Endothelial cell of umbilical vein (primary cell): ENCODE measurements at regions of chr9 and their contacts with region 1.

Region 1: DNA sequence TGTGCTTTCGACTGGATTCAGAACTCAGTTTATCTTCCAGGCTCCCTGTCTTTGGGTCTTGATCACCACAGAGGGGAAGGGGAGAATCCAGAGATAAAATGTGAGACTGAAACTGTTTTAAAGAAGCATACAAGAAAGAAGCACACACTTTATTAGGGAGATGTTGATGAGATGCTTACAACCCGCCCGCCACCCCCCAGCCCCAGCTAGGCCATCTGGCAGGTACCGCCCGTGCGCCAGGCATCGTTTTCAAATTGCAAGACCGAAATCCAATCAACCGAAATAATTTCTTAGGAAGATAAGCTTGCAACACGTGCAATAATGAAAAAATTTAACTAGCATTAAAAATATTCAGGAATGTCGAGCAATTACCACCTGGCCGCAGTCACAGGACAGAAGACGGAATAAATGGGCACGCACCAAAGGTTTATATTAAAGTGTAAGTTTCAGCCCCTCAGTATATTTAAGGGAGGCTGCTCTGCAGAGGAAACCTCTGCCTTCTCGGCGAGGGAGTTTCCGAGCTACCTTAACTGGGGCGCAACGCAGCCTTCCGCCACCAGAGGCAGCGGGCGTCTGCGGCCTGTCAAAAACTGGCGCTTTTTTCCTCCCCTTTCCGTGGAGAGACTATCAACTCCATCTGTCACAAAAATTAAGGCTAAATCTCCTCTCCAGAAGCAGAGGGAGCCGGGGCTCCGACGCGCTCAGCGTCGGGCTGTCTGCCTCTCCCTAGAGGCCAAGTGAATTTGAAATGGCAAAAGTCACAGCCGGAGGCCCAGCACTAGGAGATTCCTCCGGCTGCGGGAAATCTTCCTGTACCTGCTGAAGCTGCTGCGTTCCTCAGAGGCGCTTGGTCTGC is 996 bp upstream of the GAS1 start:
- DNase-seq: peak; percentile 61
- H3K4me3 ChIP-seq: peak overlapping the region in 2 of 3 experiments; percentile 30 to 69
- H3K27ac ChIP-seq: no peak overlapping the region
- H3K4me1 ChIP-seq: peaks cover 3% of the 10 kb centered on the region
- H3K27me3 ChIP-seq: peaks cover 12 to 20% of the 10 kb centered on the region in 2 experiments
- CTCF ChIP-seq: peak; percentile 58 to 84
- POLR2A ChIP-seq: no peak

Region 2: DNA sequence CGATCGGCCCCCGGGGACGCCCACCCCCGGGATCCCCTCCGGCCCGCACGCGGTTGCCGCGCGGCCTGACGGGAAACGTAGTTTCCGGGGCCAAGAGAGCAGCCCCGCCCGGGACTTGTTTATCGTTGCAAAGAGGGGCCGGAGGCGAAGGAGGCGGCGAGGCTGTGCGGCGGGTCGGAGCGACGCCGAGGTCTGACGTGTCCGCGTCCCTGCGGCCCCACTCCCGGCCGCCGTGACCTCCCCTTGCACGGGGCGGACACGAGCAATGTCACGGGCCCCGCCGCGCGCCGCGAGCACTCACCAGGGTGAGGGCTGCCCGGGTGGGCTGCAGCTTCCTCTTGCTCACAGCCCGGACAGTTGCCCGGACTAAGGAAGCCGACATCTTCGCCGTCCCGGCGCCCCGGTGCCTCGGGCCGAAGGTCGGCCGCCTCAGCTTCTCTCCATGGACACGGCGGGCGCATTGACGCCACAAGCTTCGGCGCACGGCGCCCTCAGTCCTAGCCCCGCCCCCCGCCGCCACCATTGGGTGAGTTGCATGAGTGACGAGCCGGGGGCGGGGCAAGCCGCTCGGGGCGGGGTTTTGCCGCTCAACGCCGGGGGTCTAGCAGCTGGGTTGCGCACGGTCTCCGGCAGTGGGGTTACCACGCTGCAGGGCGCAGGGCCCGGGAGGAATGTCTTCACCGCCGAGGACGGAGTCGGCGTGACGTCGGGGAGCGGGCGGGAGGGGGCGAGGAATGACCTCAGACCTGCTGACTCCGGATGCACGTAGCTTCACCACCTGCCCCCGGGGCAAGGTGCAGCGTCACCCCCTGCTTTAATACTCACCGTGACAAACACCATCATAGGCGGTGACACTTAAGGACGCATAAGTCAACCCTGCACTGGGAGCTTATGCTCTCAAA is 666.0 kb before region 1 on chr9 and contains the start of gene ISCA1:
- CTCF ChIA-PET with region 1: no interaction called
- POLR2A ChIA-PET with region 1: no interaction called
- dilution Hi-C with region 1: no loop called
- intact Hi-C with region 1: loop called (anchors 1 kb)
- DNase-seq: peak; percentile 90
- H3K4me3 ChIP-seq: peak within 1 kb of the TSS; percentile 47 to 84 (median 76)
- H3K27ac ChIP-seq: peak within 1 kb of the TSS; percentile 88
- H3K4me1 ChIP-seq: peaks cover 11% of the 10 kb centered on the region
- H3K27me3 ChIP-seq: no peaks in the 10 kb centered on the region
- CTCF ChIP-seq: no peak
- POLR2A ChIP-seq: peak; percentile 83
- total RNA-seq, gene ISCA1: 20.6 and 22.2 TPM in 2 replicates

Region 3: DNA sequence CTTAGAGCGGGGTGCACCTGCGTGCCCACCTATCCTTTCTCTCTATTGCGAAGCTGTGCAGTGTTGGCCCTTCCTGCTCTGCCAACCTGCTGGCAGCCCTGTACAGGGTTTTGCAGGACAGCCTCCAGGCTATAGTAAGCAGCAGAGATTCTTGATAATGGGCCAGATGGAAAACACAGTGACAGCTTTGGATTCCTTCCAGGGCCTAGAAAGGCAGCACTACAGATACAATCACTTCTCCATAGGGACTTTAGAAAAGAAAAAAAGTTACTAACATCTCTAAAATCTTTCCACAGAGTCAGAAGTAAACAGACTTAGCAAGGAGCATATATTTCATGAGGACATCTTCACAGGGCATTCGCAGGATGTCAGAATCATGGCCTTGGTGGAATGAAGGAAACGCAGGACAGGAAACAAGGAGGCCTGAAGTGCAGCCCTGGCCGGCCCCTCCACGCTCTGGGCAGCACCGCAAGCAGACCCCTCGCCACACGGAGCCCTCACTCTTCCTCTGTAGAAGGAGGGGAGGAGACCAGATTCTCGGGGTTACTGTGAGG is 171.1 kb after region 1 on chr9:
- CTCF ChIA-PET with region 1: no interaction called
- POLR2A ChIA-PET with region 1: interaction called, 10 read pairs
- dilution Hi-C with region 1: no loop called
- intact Hi-C with region 1: no loop called
- DNase-seq: peak; percentile 41
- H3K4me3 ChIP-seq: no peak overlapping the region
- H3K27ac ChIP-seq: no peak overlapping the region
- H3K4me1 ChIP-seq: no peaks in the 10 kb centered on the region
- H3K27me3 ChIP-seq: no peaks in the 10 kb centered on the region
- CTCF ChIP-seq: no peak
- POLR2A ChIP-seq: no peak

Region 4: DNA sequence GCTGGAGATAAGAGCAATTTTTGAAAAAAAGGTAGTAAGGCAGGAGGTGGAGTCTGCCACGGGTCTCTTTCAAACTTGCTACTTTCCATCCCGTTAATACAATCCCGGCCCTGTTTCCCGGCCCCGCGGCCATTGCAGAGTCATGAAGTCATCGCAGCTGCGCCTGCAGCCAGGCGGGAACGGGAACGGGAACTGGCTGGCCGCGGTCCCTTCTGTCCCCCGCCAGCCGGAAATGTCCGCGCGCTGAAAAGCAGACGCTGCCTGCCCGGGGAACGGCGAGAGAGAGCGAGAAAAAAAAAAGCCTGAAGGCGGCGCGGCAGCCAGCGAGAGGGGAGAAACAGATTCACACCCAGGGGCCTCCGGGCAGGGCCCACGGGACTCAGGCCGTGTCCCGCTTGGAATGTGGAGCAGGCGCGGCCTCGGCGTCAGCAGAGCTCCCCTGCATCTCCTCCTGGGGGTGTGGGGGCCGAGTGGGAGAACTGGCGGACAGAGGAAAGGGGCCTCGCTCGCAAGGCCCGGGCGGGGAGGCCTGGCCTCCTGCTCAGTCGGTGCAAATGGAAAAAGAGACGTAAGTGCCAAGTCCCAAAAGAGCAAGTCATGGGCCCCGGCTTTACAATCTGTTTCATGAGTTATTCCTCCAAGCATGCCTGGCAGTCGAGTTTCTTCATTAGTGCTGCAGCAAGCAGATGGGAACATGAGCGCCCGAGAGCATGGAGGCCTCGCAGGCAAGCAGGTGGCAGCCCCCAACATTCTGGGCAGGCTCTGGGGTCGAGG is 200.2 kb after region 1 on chr9:
- CTCF ChIA-PET with region 1: no interaction called
- POLR2A ChIA-PET with region 1: no interaction called
- dilution Hi-C with region 1: no loop called
- intact Hi-C with region 1: loop called (anchors 2 kb)
- DNase-seq: peak; percentile 69
- H3K4me3 ChIP-seq: peak overlapping the region in 2 of 3 experiments; percentile 6 to 9
- H3K27ac ChIP-seq: no peak overlapping the region
- H3K4me1 ChIP-seq: peaks cover 3% of the 10 kb centered on the region
- H3K27me3 ChIP-seq: no peaks in the 10 kb centered on the region
- CTCF ChIP-seq: no peak
- POLR2A ChIP-seq: no peak

Region 5: GRCh38 chr9:87270221-87270847 is 322.0 kb after region 1 on chr9:
- CTCF ChIA-PET with region 1: no interaction called
- POLR2A ChIA-PET with region 1: no interaction called
- dilution Hi-C with region 1: no loop called
- intact Hi-C with region 1: loop called (anchors 10 kb)
- DNase-seq: peak; percentile 70
- H3K4me3 ChIP-seq: no peak overlapping the region
- H3K27ac ChIP-seq: no peak overlapping the region
- H3K4me1 ChIP-seq: peaks cover 11% of the 10 kb centered on the region
- H3K27me3 ChIP-seq: no peaks in the 10 kb centered on the region
- CTCF ChIP-seq: no peak
- POLR2A ChIP-seq: no peak